ENCODE measurements at regions of chr18 and their contacts with region 1.

Region 1: DNA sequence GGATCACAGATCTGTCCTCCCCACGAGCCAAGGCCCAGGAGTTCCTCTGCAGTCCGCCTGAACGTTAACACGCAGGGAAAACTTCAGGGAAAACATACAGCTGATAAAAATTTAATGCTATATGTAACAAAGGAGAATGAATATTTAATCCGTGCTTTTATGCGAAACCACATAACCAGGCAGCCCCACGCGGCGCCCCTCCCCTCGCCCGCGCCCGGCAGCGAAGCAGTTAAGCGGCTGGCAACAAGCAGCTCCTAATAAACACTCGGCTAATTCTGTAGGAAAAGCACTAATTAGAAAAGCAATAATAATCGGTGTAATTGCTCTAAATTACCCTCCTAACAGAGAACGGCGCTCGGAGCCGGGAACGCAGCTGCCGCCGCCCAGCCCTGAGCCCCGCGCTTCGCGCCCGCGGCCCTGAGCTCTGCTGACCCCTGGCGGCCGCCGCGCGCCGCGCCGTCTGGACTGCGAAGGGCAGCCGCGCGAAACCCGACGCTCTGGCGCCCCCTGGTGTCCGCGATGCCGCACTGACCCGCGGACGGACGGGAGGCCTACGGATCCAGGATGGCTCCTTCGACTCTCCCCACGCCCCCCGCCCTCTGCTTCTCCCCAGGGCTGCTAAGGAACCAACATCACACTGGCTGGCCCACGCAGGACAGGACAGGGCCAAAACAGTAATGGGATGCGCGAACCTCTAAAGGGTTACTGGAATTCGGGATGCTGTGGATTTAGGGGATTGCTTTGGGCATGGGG is 181.4 kb downstream of the SMAD2 start:
- DNase-seq: no peak
- H3K4me3 ChIP-seq: peak overlapping the region; percentile 40
- CTCF ChIP-seq: peak; percentile 96

Region 2: DNA sequence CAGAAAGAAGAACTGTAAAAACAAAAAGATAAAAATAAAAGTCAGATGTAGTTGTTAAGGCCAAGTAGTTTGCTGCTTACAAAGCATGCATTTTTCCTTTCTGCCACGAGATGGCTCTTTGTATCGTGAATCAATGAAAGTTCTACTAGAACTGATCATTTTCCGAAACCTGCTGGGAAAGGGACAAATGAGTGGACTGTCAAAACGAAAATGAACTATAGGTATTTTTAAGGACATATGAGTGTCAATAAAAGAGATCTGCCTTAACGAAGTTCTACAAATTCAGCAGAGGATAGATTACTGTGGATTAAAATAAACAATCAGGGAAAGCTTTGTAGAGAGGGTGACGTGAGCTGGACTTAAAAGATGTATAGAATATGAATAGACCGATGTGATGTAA is 698.6 kb before region 1 on chr18:
- CTCF ChIA-PET with region 1: interaction called, 50 read pairs
- POLR2A ChIA-PET with region 1: no interaction called
- DNase-seq: peak; percentile 17
- H3K4me3 ChIP-seq: no peak overlapping the region
- CTCF ChIP-seq: peak; percentile 47

Region 3: DNA sequence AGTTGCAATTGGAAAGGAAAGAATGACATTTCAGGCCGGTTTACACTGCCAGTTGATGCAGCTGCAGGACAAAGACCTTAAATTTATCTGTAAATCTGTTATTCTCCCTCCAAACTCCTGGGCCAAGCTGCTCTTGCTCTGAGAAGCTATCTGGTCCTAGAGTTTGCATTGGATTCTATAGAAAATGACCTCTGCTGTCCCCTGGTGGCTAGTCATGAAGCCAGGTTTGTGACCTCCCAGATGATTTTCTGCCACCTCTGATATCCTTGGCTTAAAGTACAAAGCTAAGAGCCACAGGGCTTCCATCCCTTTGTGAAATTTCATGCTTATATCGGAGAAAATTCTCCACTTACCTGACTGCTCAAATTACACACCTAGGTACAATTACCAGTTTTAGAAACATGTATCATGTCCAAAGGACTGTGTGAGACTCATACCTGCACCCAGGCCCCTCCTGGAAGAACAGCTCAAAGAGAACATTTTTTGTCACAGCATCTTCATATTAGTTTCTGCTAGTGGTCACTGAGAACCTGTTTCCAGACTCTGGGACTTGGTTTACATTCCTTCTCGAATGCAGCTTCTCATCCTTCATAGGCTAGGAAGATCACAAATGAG is 544.0 kb before region 1 on chr18:
- CTCF ChIA-PET with region 1: interaction called, 27 read pairs
- POLR2A ChIA-PET with region 1: no interaction called
- DNase-seq: no peak
- H3K4me3 ChIP-seq: no peak overlapping the region
- CTCF ChIP-seq: peak; percentile 77

Region 4: GRCh38 chr18:47226660-47227059 is 522.4 kb before region 1 on chr18:
- CTCF ChIA-PET with region 1: interaction called, 22 read pairs
- POLR2A ChIA-PET with region 1: no interaction called
- DNase-seq: no peak
- H3K4me3 ChIP-seq: no peak overlapping the region
- CTCF ChIP-seq: no peak

Region 5: DNA sequence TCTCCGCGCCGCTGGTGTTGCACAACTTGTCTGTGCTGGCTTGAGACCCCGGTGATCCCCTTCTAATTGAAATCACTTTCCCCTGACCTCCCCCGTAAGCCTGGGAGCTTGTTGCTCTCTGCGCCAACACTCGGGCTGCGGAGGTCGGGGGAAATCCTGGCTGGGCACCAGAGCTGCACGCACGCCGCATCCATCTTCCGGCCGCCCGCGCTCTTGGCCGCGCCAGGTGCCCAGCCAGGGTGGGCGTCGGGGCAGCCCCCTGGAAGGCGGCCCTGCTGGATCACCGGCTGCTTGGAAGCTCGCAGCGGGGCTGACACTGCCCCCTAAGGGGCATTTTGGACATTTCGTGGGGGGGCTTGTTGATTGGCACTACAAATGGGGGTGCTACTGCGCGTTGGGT is 217.3 kb before region 1 on chr18:
- CTCF ChIA-PET with region 1: no interaction called
- POLR2A ChIA-PET with region 1: no interaction called
- DNase-seq: no peak
- H3K4me3 ChIP-seq: no peak overlapping the region
- CTCF ChIP-seq: no peak

Region 6: DNA sequence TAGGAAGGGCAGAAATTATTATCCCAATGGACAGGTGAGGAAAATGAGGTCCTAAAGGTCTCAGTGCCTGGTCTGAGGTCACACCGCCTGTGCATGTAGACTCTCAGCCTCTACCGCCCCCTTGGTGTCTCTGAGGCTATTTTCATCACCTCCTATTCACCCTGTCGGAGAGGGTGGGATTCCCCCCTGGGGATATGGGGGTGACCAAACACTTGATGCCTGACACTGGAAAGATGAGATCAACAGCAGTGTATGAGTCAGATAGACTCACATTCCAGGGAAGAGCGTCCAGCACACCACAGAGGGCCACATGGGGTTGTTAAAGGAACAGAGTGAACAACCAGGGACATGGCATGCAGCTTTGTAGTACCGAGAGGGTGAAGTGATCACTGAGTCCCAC is 18.2 kb before region 1 on chr18:
- CTCF ChIA-PET with region 1: interaction called, 48 read pairs
- POLR2A ChIA-PET with region 1: no interaction called
- DNase-seq: no peak
- H3K4me3 ChIP-seq: no peak overlapping the region
- CTCF ChIP-seq: no peak